ENCODE measurements at regions of chr6 and their contacts with region 1.

Region 1: GRCh38 chr6:51559059-51559458 is 528.4 kb downstream of the PKHD1 start:
- DNase-seq: no peak
- ATAC-seq: no peak

Region 2: GRCh38 chr6:51513891-51514747 is 44.9 kb before region 1 on chr6:
- intact Hi-C with region 1: no loop called
- DNase-seq: no peak
- ATAC-seq: no peak

Region 3: GRCh38 chr6:51753635-51754034 is 194.6 kb after region 1 on chr6:
- intact Hi-C with region 1: loop called (anchors 2 kb)
- DNase-seq: no peak
- ATAC-seq: no peak

Measured in Right ventricle myocardium inferior (tissue), 1 donor.